ENCODE measurements at regions of chr4 and their contacts with region 1.

Region 1: GRCh38 chr4:89024051-89024675 is 32.8 kb downstream of the FAM13A start:
- DNase-seq: peak; percentile 47
- ATAC-seq: peak; percentile 99
- H3K4me3 ChIP-seq: no peak overlapping the region
- H3K27ac ChIP-seq: no peak overlapping the region
- H3K4me1 ChIP-seq: no peaks in the 10 kb centered on the region
- H3K27me3 ChIP-seq: no peaks in the 10 kb centered on the region
- CTCF ChIP-seq: peak; percentile 61 to 83 (median 62); a peak in 5 of 6 replicates
- EP300 ChIP-seq: no peak
- POLR2A ChIP-seq: no peak
- RAD21 ChIP-seq: peak; percentile 93

Region 2: GRCh38 chr4:88523325-88524129 is 500.6 kb before region 1 on chr4 and contains the start of gene PYURF:
- CTCF ChIA-PET with region 1: interaction called, 40 read pairs
- POLR2A ChIA-PET with region 1: no interaction called
- RAD21 ChIA-PET with region 1: interaction called, 19 read pairs
- SMC1A ChIA-PET with region 1: interaction called, 25 read pairs
- in situ Hi-C with region 1: loop called (anchors 5 kb)
- intact Hi-C with region 1: no loop called
- DNase-seq: peak; percentile 44
- ATAC-seq: peak; percentile 88
- H3K4me3 ChIP-seq: peak within 1 kb of the TSS; percentile 71
- H3K27ac ChIP-seq: peak within 1 kb of the TSS; percentile 67
- H3K4me1 ChIP-seq: peaks cover 31% of the 10 kb centered on the region
- H3K27me3 ChIP-seq: no peaks in the 10 kb centered on the region
- CTCF ChIP-seq: no peak
- EP300 ChIP-seq: no peak
- POLR2A ChIP-seq: peak; percentile 93
- RAD21 ChIP-seq: no peak
- polyA plus RNA-seq, gene PYURF: 16.7 to 58.1 TPM

Region 3: DNA sequence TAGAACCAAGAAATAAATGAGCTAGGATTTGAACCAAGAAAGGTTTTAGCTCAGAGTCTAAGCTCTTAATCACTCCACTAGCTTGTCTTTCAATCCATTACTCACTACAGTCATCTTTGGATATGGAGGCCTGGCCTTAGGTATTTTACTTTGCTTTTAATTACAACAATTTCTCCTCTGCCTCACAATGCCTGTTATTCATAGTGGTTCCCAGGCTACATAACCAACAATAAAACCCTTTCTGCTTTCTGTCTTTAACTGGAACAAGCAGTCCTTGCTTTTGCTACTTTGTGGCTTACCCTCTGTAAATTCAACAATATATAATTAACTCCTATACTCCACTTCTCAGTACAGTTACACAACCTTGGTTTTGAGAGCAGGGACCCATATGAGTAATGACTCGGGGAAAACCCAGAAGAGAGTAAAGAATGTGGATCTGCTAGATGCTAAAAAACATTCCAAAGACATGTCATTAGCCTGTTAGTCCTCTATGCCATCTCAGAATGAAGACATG is 231.8 kb before region 1 on chr4:
- CTCF ChIA-PET with region 1: interaction called, 21 read pairs
- POLR2A ChIA-PET with region 1: no interaction called
- RAD21 ChIA-PET with region 1: interaction called, 8 read pairs
- SMC1A ChIA-PET with region 1: interaction called, 12 read pairs
- in situ Hi-C with region 1: no loop called
- intact Hi-C with region 1: no loop called
- DNase-seq: peak; percentile 16
- ATAC-seq: peak; percentile 93
- H3K4me3 ChIP-seq: no peak overlapping the region
- H3K27ac ChIP-seq: no peak overlapping the region
- H3K4me1 ChIP-seq: peaks cover 9% of the 10 kb centered on the region
- H3K27me3 ChIP-seq: no peaks in the 10 kb centered on the region
- CTCF ChIP-seq: no peak
- EP300 ChIP-seq: peak; percentile 36 to 65; a peak in 2 of 4 replicates
- POLR2A ChIP-seq: no peak
- RAD21 ChIP-seq: no peak

Region 4: DNA sequence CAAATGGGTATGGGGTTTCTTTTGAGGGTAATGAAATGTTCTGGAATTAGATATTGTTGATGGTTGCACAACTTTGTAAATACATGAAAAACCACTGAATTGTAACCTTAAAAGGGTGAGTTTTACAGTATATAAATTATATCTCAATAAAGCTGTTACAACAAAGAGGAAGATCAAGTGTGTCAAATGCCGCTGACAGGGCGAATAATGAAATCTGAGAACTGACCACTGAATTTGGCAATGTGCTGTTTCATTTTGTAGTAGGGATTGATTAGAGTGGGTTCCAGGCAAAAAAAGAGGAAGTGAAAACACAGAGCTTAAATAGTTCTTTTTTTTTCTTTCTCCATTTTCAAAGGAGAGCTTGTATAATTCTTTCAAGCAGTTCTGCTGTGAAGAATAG is 165.4 kb before region 1 on chr4:
- CTCF ChIA-PET with region 1: interaction called, 5 read pairs
- POLR2A ChIA-PET with region 1: interaction called, 3 read pairs
- RAD21 ChIA-PET with region 1: interaction called, 3 read pairs
- SMC1A ChIA-PET with region 1: interaction called, 28 read pairs
- in situ Hi-C with region 1: no loop called
- intact Hi-C with region 1: no loop called
- DNase-seq: peak; percentile 61
- ATAC-seq: peak; percentile 96
- H3K4me3 ChIP-seq: no peak overlapping the region
- H3K27ac ChIP-seq: no peak overlapping the region
- H3K4me1 ChIP-seq: peaks cover 6% of the 10 kb centered on the region; the same call in 1 of the 2 replicates
- H3K27me3 ChIP-seq: no peaks in the 10 kb centered on the region
- CTCF ChIP-seq: no peak
- EP300 ChIP-seq: peak in 1 of 2 experiments; percentile 71; a peak in 2 of 4 replicates
- POLR2A ChIP-seq: no peak
- RAD21 ChIP-seq: no peak

Region 5: GRCh38 chr4:89039730-89040338 is 15.7 kb after region 1 on chr4:
- CTCF ChIA-PET with region 1: interaction called, 24 read pairs
- POLR2A ChIA-PET with region 1: no interaction called
- RAD21 ChIA-PET with region 1: interaction called, 9 read pairs
- SMC1A ChIA-PET with region 1: interaction called, 27 read pairs
- in situ Hi-C with region 1: no loop called
- intact Hi-C with region 1: no loop called
- DNase-seq: no peak
- ATAC-seq: no peak
- H3K4me3 ChIP-seq: no peak overlapping the region
- H3K27ac ChIP-seq: no peak overlapping the region
- H3K4me1 ChIP-seq: no peaks in the 10 kb centered on the region
- H3K27me3 ChIP-seq: no peaks in the 10 kb centered on the region
- CTCF ChIP-seq: no peak
- EP300 ChIP-seq: no peak
- POLR2A ChIP-seq: no peak
- RAD21 ChIP-seq: no peak

Region 6: GRCh38 chr4:89101256-89102161 is 77.3 kb after region 1 on chr4:
- CTCF ChIA-PET with region 1: interaction called, 8 read pairs
- POLR2A ChIA-PET with region 1: no interaction called
- RAD21 ChIA-PET with region 1: interaction called, 11 read pairs
- SMC1A ChIA-PET with region 1: interaction called, 4 read pairs
- in situ Hi-C with region 1: no loop called
- intact Hi-C with region 1: no loop called
- DNase-seq: peak; percentile 86
- ATAC-seq: peak; percentile 98
- H3K4me3 ChIP-seq: peak overlapping the region; percentile 10; the same call in 1 of the 2 replicates
- H3K27ac ChIP-seq: peak overlapping the region; percentile 95
- H3K4me1 ChIP-seq: peaks cover 7% of the 10 kb centered on the region
- H3K27me3 ChIP-seq: no peaks in the 10 kb centered on the region
- CTCF ChIP-seq: no peak
- EP300 ChIP-seq: peak; percentile 48 to 53; a peak in 1 of 4 replicates
- POLR2A ChIP-seq: no peak
- RAD21 ChIP-seq: no peak

Region 7: DNA sequence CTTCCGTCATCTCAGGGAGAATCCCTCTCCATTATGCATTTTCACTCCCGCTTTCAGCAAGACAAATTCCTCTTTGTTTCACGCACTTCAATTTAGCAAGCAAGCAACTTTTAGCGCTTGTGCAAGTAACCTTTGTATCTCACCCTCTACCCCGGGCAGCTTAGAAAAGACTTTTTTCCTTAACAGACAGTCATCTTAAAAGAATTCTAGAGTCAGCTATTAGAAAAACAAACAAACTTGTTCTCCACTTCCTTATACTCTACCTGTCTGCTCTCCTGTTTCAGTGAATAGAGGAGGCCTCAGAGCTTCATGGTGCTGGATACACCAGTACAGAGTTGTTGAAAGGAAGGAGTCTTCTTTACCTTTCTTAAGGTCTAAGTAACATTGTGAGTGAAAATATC is 99.3 kb after region 1 on chr4:
- CTCF ChIA-PET with region 1: no interaction called
- POLR2A ChIA-PET with region 1: no interaction called
- RAD21 ChIA-PET with region 1: no interaction called
- SMC1A ChIA-PET with region 1: no interaction called
- in situ Hi-C with region 1: no loop called
- intact Hi-C with region 1: no loop called
- DNase-seq: no peak
- ATAC-seq: no peak
- H3K4me3 ChIP-seq: no peak overlapping the region
- H3K27ac ChIP-seq: no peak overlapping the region
- H3K4me1 ChIP-seq: no peaks in the 10 kb centered on the region
- H3K27me3 ChIP-seq: no peaks in the 10 kb centered on the region; a peak in 1 of 4 replicates
- CTCF ChIP-seq: no peak
- EP300 ChIP-seq: no peak
- POLR2A ChIP-seq: no peak
- RAD21 ChIP-seq: no peak

Region 8: DNA sequence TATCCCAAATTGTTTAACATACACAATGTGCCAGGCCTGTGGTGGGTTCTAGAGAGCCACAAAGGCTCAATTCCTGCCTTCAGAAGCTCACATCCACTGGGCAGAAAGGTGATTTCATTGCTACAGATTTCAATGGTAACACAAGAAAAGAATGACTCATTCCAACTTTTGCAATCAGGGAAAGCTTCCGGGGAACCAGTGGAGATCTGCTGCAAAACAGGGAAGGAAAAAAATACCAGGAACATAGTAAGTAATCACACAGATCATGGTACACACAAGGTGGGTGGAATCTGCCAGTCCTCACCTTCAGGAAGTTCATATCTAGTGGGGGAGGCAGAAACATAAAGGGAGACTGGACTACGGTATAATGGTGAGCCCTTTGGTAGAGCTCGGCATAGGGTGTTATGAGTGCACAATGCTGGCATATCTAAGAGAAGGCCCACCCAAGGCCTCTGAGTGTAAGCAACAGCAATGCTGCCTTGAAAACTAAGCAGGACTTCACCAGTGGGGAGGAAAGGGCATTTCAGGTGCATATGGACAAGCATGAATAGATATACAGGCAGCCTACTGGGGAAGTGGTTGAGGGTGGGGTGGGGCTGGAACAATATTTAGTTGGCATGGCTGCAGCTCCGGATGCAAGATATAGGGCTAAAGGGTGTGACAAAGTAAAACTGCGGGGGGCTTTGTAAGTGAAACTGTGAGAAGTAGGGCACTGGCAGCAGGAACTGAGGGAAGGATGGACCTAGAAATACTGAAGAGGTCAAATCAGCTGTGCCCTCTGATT is 259.3 kb after region 1 on chr4:
- CTCF ChIA-PET with region 1: no interaction called
- POLR2A ChIA-PET with region 1: no interaction called
- RAD21 ChIA-PET with region 1: no interaction called
- SMC1A ChIA-PET with region 1: no interaction called
- in situ Hi-C with region 1: no loop called
- intact Hi-C with region 1: no loop called
- DNase-seq: no peak
- ATAC-seq: no peak
- H3K4me3 ChIP-seq: no peak overlapping the region
- H3K27ac ChIP-seq: no peak overlapping the region
- H3K4me1 ChIP-seq: no peaks in the 10 kb centered on the region
- H3K27me3 ChIP-seq: 0 out of 4 replicates have a peak, but pooled peaks cover 0 to 1% of the 10 kb centered on the region in 2 experiments
- CTCF ChIP-seq: no peak
- EP300 ChIP-seq: no peak
- POLR2A ChIP-seq: no peak
- RAD21 ChIP-seq: no peak